ENCODE measurements at regions of chr9 and their contacts with region 1.

Region 1: GRCh38 chr9:18442629-18443491 is 31.1 kb upstream of the ADAMTSL1 start:
- DNase-seq: peak; percentile 72
- H3K4me3 ChIP-seq: no peak overlapping the region
- H3K27ac ChIP-seq: peak overlapping the region; percentile 0 to 15
- H3K4me1 ChIP-seq: no peaks in the 10 kb centered on the region
- H3K27me3 ChIP-seq: no peaks in the 10 kb centered on the region
- CTCF ChIP-seq: peak; percentile 72 to 83 (median 79)
- POLR2A ChIP-seq: no peak

Region 2: DNA sequence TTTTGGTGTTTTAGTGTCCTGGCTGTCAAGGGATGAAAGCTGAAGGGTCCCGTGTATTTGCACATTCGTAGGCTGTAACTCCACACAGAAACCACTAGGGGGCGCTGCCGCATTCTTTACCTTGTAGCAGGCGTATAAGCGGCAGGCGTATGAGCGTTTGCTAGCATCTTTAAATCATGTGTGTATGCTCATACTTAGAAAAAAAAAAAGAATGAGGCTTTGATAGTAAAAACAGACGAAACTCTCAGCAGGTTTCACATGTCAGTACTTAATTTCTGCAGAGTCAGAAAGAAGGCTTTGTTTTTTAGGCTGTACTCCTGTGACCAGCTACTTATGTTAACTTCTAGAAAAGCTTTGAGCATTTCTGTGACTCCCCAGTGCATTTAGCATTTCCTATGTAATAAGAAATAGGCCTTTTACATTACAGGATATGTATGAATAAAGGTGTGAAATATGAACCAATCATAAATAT is 187.7 kb before region 1 on chr9:
- intact Hi-C with region 1: loop called (anchors 5 kb)
- DNase-seq: peak; percentile 64
- H3K4me3 ChIP-seq: no peak overlapping the region
- H3K27ac ChIP-seq: no peak overlapping the region
- H3K4me1 ChIP-seq: peaks cover under 1% of the 10 kb centered on the region
- H3K27me3 ChIP-seq: no peaks in the 10 kb centered on the region
- CTCF ChIP-seq: peak; percentile 87 to 96 (median 88)
- POLR2A ChIP-seq: no peak

Region 3: DNA sequence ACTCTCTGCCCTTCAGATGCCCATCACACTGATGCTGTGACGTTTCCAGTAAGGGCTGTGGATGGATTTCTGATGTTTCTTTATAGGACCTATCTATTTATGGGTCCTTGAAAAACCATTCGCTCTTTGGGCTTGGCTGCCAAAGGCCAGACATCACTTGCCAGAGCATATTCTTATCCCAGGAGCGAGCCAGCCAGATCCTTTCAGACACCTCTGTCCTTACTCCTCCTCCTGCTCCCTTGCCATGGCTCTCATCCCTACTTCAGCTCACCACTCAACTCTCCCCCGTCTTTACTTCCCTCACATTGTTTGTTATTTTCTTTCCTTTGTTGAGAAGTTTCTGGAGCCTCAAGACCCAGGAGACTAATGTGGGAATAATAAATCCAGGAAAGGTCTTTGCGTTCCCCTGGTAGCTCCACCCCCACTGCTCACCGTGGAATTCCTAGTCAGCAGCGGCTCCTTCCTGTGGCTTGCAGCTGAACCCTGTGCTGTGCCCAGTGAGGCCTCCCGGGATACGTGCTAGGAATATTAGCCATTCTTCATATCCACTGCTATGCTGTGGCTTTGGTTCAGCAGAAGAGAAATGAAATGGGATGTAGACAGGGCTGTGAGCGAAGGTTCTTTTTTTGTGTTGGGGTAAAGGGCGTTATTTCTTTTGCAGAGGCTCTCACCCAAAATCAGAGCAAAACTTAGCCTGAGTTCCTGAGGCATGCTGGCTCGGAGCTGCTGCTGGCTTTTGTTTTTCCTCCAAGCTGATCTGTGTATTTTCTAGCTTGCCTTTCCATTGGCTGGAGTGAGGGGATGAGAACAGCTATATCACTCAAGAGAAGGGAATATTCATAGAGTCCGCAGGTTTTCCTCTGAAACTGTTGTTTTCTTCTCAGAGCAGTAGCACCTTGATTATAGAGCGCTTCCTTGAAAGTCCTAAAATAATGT is 419.0 kb after region 1 on chr9:
- intact Hi-C with region 1: loop called (anchors 10 kb)
- DNase-seq: no peak
- H3K4me3 ChIP-seq: no peak overlapping the region
- H3K27ac ChIP-seq: no peak overlapping the region
- H3K4me1 ChIP-seq: no peaks in the 10 kb centered on the region
- H3K27me3 ChIP-seq: no peaks in the 10 kb centered on the region
- CTCF ChIP-seq: no peak
- POLR2A ChIP-seq: no peak

Region 4: DNA sequence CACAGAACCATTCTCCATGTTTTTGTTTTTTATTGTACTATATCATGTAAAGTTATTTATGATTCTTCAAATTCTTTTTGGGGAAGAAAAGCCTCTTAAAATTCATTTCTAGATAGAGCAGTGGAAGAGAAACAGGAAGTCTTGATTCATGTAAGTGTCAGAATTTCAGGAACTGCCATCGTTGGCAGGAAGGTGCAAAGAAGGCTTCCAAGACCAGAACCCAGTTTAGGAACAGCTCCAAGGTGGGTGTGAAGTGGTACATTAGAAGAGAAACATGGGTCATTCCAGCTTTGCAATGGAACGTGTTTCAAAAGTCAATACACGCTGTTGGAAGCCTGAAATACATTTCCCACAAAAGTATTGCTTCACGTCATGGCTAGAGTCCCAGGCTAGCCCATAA is 575.3 kb after region 1 on chr9:
- intact Hi-C with region 1: loop called (anchors 2 kb)
- DNase-seq: no peak
- H3K4me3 ChIP-seq: no peak overlapping the region
- H3K27ac ChIP-seq: no peak overlapping the region
- H3K4me1 ChIP-seq: no peaks in the 10 kb centered on the region
- H3K27me3 ChIP-seq: no peaks in the 10 kb centered on the region
- CTCF ChIP-seq: no peak
- POLR2A ChIP-seq: no peak